ENCODE measurements at regions of chr5 and their contacts with region 1.

Region 1: DNA sequence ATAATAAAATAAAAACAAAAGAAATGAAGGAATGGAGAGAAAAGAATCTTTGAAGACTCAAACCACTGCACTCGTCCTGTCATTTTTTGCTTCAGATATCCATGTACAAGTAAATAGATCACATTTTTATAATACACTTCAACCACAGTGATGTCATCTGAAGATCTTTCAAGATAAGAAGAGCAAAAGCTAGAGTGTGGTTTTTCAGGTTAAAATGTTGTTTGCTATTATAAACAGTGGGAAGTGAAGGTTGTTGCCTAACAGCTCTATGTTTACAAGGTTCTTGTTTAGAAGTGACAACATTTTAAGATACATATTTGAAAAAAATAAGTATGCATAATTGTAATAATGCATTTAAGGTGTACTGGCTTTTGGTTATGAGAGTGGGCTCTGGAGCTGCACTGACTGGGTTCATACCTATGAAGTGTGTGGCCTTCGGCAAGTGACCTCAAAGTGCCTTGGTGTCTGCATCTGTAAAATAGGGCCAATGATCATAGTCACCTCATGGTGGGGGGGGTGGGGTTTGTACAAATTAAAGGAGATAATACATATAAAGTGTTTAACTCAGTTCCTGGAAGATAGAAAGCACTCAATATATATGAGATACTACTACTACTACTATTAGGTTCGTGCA is 45.5 kb upstream of the IL7R start:
- DNase-seq: peak; percentile 62
- H3K4me3 Mint-ChIP-seq: peak overlapping the region; percentile 57
- H3K27ac Mint-ChIP-seq: peak overlapping the region; percentile 94
- H3K4me1 Mint-ChIP-seq: peaks cover 69% of the 10 kb centered on the region
- H3K27me3 Mint-ChIP-seq: no peaks in the 10 kb centered on the region

Region 2: GRCh38 chr5:35822511-35822910 is 11.3 kb after region 1 on chr5:
- CTCF ChIA-PET with region 1: interaction called, 11 read pairs
- POLR2A ChIA-PET with region 1: no interaction called
- DNase-seq: peak; percentile 81
- H3K4me3 Mint-ChIP-seq: peak overlapping the region; percentile 56
- H3K27ac Mint-ChIP-seq: peak overlapping the region; percentile 83
- H3K4me1 Mint-ChIP-seq: peaks cover 90% of the 10 kb centered on the region
- H3K27me3 Mint-ChIP-seq: no peaks in the 10 kb centered on the region

Region 3: DNA sequence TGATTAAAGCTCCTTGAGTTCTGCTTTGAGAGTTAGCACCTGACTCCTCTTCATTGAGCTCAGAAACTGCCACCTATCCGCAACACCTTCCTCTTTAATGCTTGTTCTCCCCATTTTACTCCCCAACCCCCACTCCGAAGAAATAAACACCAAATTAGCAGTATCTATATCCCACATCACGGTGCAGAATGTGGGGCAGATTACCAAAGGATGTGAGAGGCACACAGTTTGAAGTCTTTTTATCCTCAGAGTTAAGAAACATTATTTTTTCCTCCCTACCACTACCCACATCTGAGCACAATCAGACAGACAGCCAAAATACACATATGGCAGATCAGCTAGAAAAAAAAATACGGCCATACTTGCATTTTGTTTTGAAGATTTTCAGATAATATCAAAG is 19.4 kb after region 1 on chr5:
- CTCF ChIA-PET with region 1: interaction called, 10 read pairs
- POLR2A ChIA-PET with region 1: interaction called, 3 read pairs
- DNase-seq: peak; percentile 75
- H3K4me3 Mint-ChIP-seq: peak overlapping the region; percentile 48
- H3K27ac Mint-ChIP-seq: peak overlapping the region; percentile 88
- H3K4me1 Mint-ChIP-seq: peaks cover 93% of the 10 kb centered on the region
- H3K27me3 Mint-ChIP-seq: no peaks in the 10 kb centered on the region

Measured in activated CD4-positive, alpha-beta T cell treated with anti-CD3 and anti-CD28 coated beads, Interleukin-2, amount 10 ng/mL, durations not matched to agents 7 days and 5 days (primary cell).